ENCODE measurements at regions of chr15 and their contacts with region 1.

Region 1: GRCh38 chr15:66476535-66476934 is 21.0 kb downstream of the SNAPC5 start:
- DNase-seq: no peak
- ATAC-seq: no peak
- H3K4me3 ChIP-seq: no peak overlapping the region
- H3K27ac ChIP-seq: no peak overlapping the region
- H3K4me1 ChIP-seq: peaks cover 5% of the 10 kb centered on the region
- H3K27me3 ChIP-seq: no peaks in the 10 kb centered on the region
- CTCF ChIP-seq: no peak

Region 2: GRCh38 chr15:66401130-66402021 is 75.2 kb before region 1 on chr15:
- intact Hi-C with region 1: loop called in 1 of 2 experiments (anchors 5 kb)
- DNase-seq: no peak
- ATAC-seq: no peak
- H3K4me3 ChIP-seq: no peak overlapping the region
- H3K27ac ChIP-seq: no peak overlapping the region
- H3K4me1 ChIP-seq: peaks cover 33% of the 10 kb centered on the region
- H3K27me3 ChIP-seq: no peaks in the 10 kb centered on the region
- CTCF ChIP-seq: no peak

Region 3: GRCh38 chr15:66654739-66655375 is 178.3 kb after region 1 on chr15:
- intact Hi-C with region 1: no loop called
- DNase-seq: no peak
- ATAC-seq: peak in 1 of 4 donors; percentile 32
- H3K4me3 ChIP-seq: peak overlapping the region; percentile 32
- H3K27ac ChIP-seq: no peak overlapping the region
- H3K4me1 ChIP-seq: peaks cover 6% of the 10 kb centered on the region
- H3K27me3 ChIP-seq: peaks cover 0 to 13% (median 6%) of the 10 kb centered on the region in 3 donors
- CTCF ChIP-seq: no peak

Measured in psoas muscle (tissue), 8 donors.